ENCODE measurements at regions of chrX and their contacts with region 1.

Region 1: DNA sequence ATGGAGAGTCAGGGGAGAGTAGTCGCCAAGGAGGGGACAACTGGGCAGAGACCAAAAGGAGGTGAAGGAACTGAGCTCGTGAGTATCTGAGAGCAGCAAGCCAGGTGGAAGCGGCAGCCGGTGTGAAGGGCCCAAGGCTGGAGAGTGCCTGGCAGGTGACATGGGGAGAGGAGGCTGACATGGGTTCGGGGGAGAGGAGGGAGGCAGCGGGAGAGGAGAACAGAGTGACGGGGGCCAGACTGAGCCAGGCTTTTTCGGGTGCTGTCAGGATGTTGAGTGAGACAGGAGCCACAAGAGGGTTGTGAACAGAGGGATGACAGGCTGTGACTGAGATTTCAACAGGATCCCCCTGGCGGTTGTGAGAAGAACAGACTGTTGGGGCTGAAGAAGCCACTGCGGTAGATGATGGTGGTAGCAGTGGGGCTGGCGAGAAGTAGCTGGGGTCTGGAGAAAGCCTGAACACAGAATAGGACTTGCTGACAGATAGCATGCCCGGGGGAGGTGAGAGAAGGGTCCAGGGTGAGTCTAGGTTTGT is 5.7 kb downstream of the ELK1 start:
- DNase-seq: peak; percentile 73

Region 2: DNA sequence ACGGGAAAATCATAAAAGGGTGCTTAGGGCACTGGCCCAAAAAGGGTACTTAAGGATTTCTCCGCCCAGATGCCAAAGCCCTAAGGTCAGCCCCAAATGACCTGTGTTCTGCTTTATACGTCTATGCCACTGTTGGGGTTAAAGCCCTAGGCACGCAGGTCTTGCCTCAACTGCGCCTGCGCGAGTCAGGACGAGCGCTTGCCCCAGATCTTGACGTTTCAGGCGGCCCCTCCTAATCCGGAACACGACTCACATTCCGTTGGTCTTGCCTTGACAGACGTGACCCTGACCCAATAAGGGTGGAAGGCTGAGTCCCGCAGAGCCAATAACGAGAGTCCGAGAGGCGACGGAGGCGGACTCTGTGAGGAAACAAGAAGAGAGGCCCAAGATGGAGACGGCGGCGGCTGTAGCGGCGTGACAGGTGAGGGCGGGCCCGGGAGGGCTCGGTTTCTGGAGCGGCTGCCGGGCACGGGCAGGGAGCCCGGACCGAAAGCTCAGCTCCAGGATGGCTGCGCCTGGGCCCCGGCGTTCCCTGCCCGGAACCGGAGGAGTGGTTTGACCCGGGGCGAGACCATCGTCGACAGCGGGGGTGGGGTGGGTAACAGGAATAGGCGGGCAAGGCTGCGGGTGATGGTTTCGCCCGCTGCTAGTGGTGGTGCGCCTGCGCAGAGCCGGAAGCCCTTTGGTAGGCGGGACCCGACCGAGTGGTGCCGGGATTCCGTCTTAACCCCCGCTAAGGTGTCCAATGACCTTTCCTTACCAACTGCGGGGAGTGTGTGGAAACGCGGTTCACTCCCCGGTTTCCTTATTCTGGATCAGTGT is 83.6 kb before region 1 on chrX and contains the start of gene ARAF:
- in situ Hi-C with region 1: loop called (anchors 10 kb)
- DNase-seq: peak; percentile 99

Region 3: GRCh38 chrX:47595716-47596251 is 48.8 kb before region 1 on chrX:
- in situ Hi-C with region 1: no loop called
- DNase-seq: peak; percentile 42

Region 4: DNA sequence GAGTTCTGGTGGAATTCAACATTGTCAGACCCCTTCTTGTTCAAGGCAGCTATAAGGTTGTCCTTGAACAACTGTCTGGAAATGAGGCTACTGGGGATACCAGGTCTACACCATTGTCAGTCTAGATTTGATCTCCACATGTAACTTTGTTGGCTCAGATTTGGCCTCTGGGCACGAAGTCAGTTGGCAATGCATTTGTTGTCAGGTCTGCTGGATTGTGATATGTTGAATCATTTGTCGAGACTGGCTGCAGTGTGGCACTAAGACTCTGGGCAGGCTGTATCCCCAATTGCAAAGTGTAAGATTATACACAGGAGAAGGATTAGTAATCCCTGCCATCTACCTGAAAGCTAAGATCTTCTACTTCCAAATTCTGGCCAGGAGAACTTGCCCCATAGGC is 218.6 kb after region 1 on chrX:
- in situ Hi-C with region 1: no loop called
- DNase-seq: no peak